ENCODE measurements at regions of chr1 and their contacts with region 1.

Region 1: DNA sequence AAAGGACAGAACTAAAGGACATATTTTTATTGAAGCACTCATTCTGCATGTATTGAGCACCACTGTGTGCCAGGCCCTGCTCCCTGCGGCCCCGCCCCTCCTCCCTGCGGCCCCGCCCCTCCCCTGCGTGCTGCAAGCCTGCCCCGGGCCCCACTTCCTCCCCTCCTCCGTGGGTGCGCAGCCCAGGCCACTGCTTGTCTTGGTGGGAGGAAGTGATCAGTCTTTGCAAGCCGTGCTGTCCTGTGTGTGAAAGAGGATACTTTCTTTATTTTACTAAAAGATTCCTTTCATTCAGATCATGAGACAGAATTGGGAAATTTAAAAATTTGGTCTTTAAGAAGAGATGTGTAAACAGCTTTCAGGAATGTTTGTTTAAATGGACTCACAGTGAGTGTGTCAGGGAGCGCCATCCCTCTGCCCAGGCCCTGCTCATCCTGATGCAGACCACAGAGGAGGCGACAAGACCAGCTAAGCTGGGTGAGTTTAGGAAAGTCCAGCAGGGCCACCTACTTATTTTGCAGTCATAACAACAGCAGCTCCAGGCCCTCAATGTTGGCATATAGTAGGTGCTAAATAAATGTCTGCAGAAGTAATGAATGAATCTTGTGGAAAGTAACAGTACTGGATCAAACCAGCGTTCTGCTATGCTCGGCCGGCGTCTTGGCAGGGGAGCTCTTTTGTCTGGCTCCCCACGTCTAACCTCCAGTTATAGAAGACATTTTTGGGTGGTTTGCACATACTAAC is 88.3 kb upstream of the SELENON start:
- DNase-seq: peak; percentile 73
- ATAC-seq: peak; percentile 79
- H3K4me3 Mint-ChIP-seq: peak overlapping the region; percentile 40
- H3K27ac Mint-ChIP-seq: peak overlapping the region; percentile 80
- H3K4me1 Mint-ChIP-seq: peaks cover 62% of the 10 kb centered on the region
- H3K27me3 Mint-ChIP-seq: no peaks in the 10 kb centered on the region
- CTCF ChIP-seq: no peak

Region 2: GRCh38 chr1:25534408-25534779 is 177.3 kb before region 1 on chr1:
- CTCF ChIA-PET with region 1: no interaction called
- POLR2A ChIA-PET with region 1: no interaction called
- intact Hi-C with region 1: no loop called
- DNase-seq: no peak
- ATAC-seq: no peak
- H3K4me3 Mint-ChIP-seq: no peak overlapping the region
- H3K27ac Mint-ChIP-seq: no peak overlapping the region
- H3K4me1 Mint-ChIP-seq: peaks cover 3% of the 10 kb centered on the region
- H3K27me3 Mint-ChIP-seq: no peaks in the 10 kb centered on the region
- CTCF ChIP-seq: no peak

Region 3: GRCh38 chr1:25796811-25797458 is 85.2 kb after region 1 on chr1:
- CTCF ChIA-PET with region 1: interaction called, 3 read pairs
- POLR2A ChIA-PET with region 1: no interaction called
- intact Hi-C with region 1: loop called (anchors 10 kb)
- DNase-seq: peak; percentile 92
- ATAC-seq: peak; percentile 57
- H3K4me3 Mint-ChIP-seq: peak overlapping the region; percentile 45
- H3K27ac Mint-ChIP-seq: peak overlapping the region; percentile 78
- H3K4me1 Mint-ChIP-seq: peaks cover 44% of the 10 kb centered on the region
- H3K27me3 Mint-ChIP-seq: no peaks in the 10 kb centered on the region
- CTCF ChIP-seq: peak; percentile 81

Measured in activated CD8-positive, alpha-beta T cell treated with anti-CD3 and anti-CD28 coated beads for 36 hours (primary cell).